IMR-90 (cell line): ENCODE measurements at regions of chr4 and their contacts with region 1.

Region 1: DNA sequence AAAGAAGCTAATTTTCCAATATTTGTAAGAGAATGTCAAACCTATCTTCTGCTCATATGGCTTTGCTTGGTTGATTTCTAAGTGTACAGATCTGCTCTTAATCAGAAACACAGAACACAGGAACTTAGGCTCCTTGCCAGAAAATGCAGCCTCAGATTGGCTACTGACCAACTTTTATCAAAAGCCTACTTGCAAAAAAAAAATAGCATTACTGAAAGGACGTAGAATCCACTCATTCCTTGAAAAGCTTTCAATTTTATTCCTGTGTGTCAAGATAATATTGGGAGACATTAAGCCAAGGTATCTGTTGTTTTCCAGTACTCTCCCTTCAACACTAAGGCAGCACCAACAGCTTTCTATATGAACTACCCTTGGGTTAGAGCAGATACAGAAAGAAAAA is 127.6 kb upstream of the INTU start:
- DNase-seq: peak; percentile 84
- ATAC-seq: no peak
- H3K4me3 ChIP-seq: no peak overlapping the region
- H3K27ac ChIP-seq: no peak overlapping the region
- H3K4me1 ChIP-seq: peaks cover 9% of the 10 kb centered on the region; the same call in 1 of the 2 replicates
- H3K27me3 ChIP-seq: no peaks in the 10 kb centered on the region
- CTCF ChIP-seq: no peak
- POLR2A ChIP-seq: no peak
- RAD21 ChIP-seq: no peak

Region 2: DNA sequence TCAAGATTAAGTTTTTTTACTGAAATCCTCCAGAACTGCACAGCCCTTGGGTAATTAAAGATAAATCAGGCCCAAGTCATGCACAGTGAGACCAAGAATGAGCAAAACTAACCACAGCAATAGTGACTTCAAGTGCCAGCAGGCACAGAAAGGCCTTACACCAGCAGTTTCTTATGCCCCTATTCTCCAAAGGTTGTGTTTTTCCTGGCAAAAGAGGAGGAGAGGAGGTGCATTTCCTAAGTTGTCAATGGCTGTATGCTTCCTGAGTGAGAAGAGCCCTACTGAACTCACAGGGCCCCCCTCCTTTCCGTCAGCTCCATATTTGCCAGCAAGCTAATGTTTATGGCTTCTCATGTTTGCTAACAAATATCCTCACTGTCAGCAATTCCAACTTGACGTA is 291.2 kb before region 1 on chr4:
- CTCF ChIA-PET with region 1: no interaction called
- POLR2A ChIA-PET with region 1: no interaction called
- dilution Hi-C with region 1: no loop called
- in situ Hi-C with region 1: no loop called
- intact Hi-C with region 1: no loop called
- DNase-seq: no peak
- ATAC-seq: no peak
- H3K4me3 ChIP-seq: no peak overlapping the region
- H3K27ac ChIP-seq: no peak overlapping the region
- H3K4me1 ChIP-seq: 0 out of 2 replicates have a peak, but pooled peaks cover 2% of the 10 kb centered on the region
- H3K27me3 ChIP-seq: no peaks in the 10 kb centered on the region
- CTCF ChIP-seq: no peak
- POLR2A ChIP-seq: no peak
- RAD21 ChIP-seq: no peak

Region 3: GRCh38 chr4:127622921-127623656 is 117.9 kb after region 1 on chr4:
- CTCF ChIA-PET with region 1: no interaction called
- POLR2A ChIA-PET with region 1: no interaction called
- dilution Hi-C with region 1: no loop called
- in situ Hi-C with region 1: loop called (anchors 25 kb)
- intact Hi-C with region 1: no loop called
- DNase-seq: peak; percentile 33
- ATAC-seq: peak; percentile 85
- H3K4me3 ChIP-seq: peak overlapping the region; percentile 90
- H3K27ac ChIP-seq: peak overlapping the region; percentile 38; the same call in 1 of the 2 replicates
- H3K4me1 ChIP-seq: no peaks in the 10 kb centered on the region
- H3K27me3 ChIP-seq: peaks cover 4% of the 10 kb centered on the region
- CTCF ChIP-seq: peak; percentile 30
- POLR2A ChIP-seq: no peak
- RAD21 ChIP-seq: 0 out of 2 replicates have a peak, but pooled peaks have one; percentile 11